ENCODE measurements at regions of chr2 and their contacts with region 1.

Region 1: DNA sequence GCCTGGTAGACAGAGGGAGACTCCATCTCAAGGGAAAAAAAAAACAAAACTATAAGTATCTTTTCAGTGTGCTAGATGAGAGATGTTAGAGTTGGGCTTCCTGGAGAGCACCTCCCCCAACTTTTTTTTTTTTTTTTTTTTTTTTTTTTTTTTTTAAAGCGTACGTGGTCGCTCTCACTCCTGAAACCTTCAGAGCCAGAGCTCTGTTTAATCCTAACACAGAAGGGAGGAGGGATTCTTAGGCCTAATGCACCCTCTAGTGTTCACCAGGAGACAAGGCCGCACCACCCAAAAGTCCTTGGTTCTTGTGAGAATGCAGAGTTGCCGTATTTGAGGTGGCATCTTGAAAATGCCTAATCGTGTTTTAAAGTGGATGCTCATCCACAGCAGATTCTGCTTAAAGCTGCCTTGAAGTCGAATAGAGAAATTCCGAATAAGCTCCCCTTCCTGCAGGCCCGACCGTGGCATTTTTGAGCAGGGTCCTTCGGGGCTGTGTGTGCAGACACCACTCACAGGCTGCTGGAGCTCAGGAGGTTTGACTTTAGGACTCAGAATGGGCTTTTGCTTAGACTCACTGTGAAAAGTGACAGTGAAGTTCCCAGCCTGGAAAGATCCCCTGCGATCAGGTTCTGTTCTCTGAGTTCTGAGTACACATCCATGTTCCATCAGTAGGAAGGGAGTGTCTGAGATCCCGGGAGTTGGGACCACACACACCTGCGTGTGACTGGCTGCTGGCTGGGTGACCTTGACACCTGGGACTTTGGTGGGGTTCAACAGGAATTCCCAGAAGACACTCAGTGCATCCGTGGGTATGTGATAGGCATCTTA is 252.6 kb downstream of the AGAP1 start:
- DNase-seq: peak; percentile 34 to 49 (median 48)
- H3K4me3 ChIP-seq: no peak overlapping the region
- H3K4me3 Mint-ChIP-seq: no peak overlapping the region
- H3K27ac ChIP-seq: no peak overlapping the region
- H3K27ac Mint-ChIP-seq: no peak overlapping the region
- H3K4me1 ChIP-seq: no peaks in the 10 kb centered on the region
- H3K4me1 Mint-ChIP-seq: no peaks in the 10 kb centered on the region
- H3K27me3 ChIP-seq: no peaks in the 10 kb centered on the region
- H3K27me3 Mint-ChIP-seq: peaks cover 8 to 15% of the 10 kb centered on the region in 2 donors

Region 2: DNA sequence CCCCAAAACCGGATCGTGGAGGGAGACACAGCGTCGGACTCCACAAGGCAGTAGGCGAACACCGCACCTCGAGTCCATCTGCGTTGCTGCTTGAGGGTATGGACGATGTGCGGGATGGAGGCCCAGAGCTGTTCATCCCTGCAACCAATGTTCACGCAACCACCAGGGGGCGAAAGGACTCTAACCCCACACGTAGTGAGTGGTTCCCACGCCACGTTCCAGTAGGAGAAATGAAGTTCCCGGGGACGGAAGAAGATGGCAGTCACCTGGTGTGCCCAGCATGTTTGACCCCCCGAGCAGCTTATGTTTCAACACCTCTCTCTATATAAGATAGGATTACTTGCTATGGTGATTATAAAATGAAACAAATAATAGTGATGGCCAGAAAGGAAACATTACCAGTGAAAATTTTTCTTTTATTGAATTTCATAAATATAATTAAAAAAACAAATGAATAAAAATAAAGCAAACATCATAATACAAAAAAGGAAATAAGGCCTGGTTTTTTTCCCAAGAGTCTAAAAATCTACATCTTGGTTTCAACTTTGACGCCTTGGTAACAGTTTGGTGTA is 610.4 kb before region 1 on chr2:
- CTCF ChIA-PET with region 1: interaction called, 13 read pairs
- POLR2A ChIA-PET with region 1: no interaction called
- intact Hi-C with region 1: no loop called
- DNase-seq: peak in 4 of 5 donors; percentile 7 to 28 (median 10)
- H3K4me3 ChIP-seq: no peak overlapping the region
- H3K4me3 Mint-ChIP-seq: no peak overlapping the region
- H3K27ac ChIP-seq: no peak overlapping the region
- H3K27ac Mint-ChIP-seq: no peak overlapping the region
- H3K4me1 ChIP-seq: peaks cover 3% of the 10 kb centered on the region
- H3K4me1 Mint-ChIP-seq: no peaks in the 10 kb centered on the region
- H3K27me3 ChIP-seq: peaks cover 11% of the 10 kb centered on the region
- H3K27me3 Mint-ChIP-seq: peaks cover 10 to 11% of the 10 kb centered on the region in 2 donors

Region 3: DNA sequence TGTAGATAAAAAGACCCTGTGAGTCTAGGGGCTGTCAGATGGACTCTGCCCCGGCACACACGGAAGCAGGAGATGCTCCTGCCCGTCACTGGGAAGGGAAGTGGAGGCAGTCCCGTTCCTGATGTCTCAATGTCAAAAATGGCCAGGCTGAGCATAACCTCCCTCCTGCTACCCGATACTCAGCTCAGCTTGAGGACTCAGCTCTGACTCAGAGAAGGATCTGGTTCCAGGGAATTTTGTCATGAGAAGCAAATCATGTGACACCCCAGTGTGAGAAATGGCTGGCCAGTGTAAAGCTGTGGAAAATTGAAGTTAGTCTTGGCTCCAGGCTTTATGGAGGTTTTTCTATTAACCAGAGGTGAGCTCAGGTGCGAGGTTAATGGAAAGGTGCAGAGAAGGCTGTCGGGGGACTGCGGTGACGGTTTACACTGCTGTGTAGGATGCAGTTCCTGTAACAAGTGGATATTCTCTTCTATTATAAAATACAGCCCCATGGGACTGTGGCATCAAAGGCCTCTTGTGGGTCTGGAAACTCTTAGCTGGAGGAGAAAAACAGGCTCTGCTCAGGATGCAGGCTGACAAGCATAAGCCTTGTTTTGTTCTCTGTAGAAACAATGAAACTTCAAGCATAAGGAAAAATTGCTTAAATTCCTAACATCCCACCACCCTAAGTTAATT is 277.4 kb before region 1 on chr2:
- CTCF ChIA-PET with region 1: no interaction called
- POLR2A ChIA-PET with region 1: no interaction called
- intact Hi-C with region 1: no loop called
- DNase-seq: no peak
- H3K4me3 ChIP-seq: no peak overlapping the region
- H3K4me3 Mint-ChIP-seq: no peak overlapping the region
- H3K27ac ChIP-seq: no peak overlapping the region
- H3K27ac Mint-ChIP-seq: no peak overlapping the region
- H3K4me1 ChIP-seq: no peaks in the 10 kb centered on the region
- H3K4me1 Mint-ChIP-seq: no peaks in the 10 kb centered on the region
- H3K27me3 ChIP-seq: no peaks in the 10 kb centered on the region
- H3K27me3 Mint-ChIP-seq: peaks cover 5 to 8% of the 10 kb centered on the region in 2 donors

Region 4: DNA sequence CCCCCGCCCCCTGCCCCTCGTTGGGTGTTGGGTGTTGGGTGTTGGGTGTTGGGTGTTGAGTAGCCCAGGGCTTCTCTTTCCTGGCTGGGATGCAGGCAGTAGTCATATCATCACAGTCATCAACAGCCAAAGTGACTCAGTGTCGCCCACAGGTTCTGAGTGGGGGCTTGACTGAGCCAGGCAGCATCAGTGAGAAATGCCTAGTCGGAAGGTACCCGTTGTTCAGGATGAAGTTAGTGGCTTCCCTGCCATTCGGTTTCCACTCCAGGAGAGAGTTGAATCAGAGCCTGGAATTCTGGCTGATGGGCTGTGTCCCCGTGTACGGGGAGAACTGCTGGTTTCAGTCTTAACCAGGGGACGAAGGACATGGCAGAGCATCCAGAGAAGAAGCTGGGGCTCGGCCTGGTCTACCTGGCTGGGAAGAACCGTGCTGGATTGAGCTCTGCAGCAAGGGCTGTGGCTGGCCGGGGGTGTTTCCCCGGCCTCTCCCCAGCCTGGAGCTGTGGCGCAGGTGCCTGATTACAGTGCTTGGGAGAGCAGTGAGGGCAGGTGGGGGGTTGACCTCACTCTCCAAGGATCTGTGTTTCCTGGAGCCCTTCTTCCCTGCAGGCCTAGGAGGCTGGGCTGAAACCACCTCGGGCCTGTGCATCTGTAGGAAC is 203.2 kb before region 1 on chr2:
- CTCF ChIA-PET with region 1: no interaction called
- POLR2A ChIA-PET with region 1: no interaction called
- intact Hi-C with region 1: no loop called
- DNase-seq: no peak
- H3K4me3 ChIP-seq: no peak overlapping the region
- H3K4me3 Mint-ChIP-seq: no peak overlapping the region
- H3K27ac ChIP-seq: no peak overlapping the region
- H3K27ac Mint-ChIP-seq: no peak overlapping the region
- H3K4me1 ChIP-seq: no peaks in the 10 kb centered on the region
- H3K4me1 Mint-ChIP-seq: no peaks in the 10 kb centered on the region
- H3K27me3 ChIP-seq: no peaks in the 10 kb centered on the region
- H3K27me3 Mint-ChIP-seq: peaks cover 4% of the 10 kb centered on the region in 2 donors

Region 5: DNA sequence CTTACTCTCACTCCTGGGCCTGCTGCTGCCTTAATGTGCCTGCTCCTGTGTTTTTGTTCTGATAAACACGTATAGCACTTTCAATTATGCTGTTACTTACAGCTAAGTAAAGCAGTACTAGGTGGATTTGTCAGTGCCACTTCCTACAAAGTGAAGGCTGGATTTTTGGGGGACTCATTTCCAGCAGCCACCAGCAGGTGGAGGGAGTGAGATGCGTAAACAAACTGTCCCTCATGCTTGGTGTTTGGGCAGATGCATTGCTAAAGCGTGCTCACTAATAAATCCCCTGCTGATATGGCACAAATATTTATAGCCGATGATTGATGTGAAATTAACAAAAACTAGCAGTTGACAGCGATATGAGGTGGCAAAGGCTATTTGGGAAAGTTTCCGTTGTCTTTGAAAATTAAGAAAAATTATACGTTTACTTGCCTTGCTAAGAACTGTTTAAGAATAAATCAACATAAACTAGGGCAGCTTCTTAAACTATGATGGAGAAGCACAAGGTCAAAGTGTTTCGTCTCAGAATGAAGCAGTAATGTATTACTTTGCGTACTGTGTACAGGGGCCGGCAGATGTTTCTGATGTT is 151.0 kb before region 1 on chr2:
- CTCF ChIA-PET with region 1: interaction called, 59 read pairs
- POLR2A ChIA-PET with region 1: no interaction called
- intact Hi-C with region 1: no loop called
- DNase-seq: peak in 4 of 5 donors; percentile 14 to 28 (median 22)
- H3K4me3 ChIP-seq: no peak overlapping the region
- H3K4me3 Mint-ChIP-seq: no peak overlapping the region
- H3K27ac ChIP-seq: no peak overlapping the region
- H3K27ac Mint-ChIP-seq: no peak overlapping the region
- H3K4me1 ChIP-seq: no peaks in the 10 kb centered on the region
- H3K4me1 Mint-ChIP-seq: peaks cover 0 to 1% (median 0%) of the 10 kb centered on the region in 4 donors
- H3K27me3 ChIP-seq: no peaks in the 10 kb centered on the region
- H3K27me3 Mint-ChIP-seq: peaks cover 2 to 3% of the 10 kb centered on the region in 2 donors

Region 6: GRCh38 chr2:235734688-235735231 is 11.7 kb before region 1 on chr2:
- CTCF ChIA-PET with region 1: interaction called, 14 read pairs
- POLR2A ChIA-PET with region 1: no interaction called
- intact Hi-C with region 1: no loop called
- DNase-seq: no peak
- H3K4me3 ChIP-seq: no peak overlapping the region
- H3K4me3 Mint-ChIP-seq: no peak overlapping the region
- H3K27ac ChIP-seq: no peak overlapping the region
- H3K27ac Mint-ChIP-seq: no peak overlapping the region
- H3K4me1 ChIP-seq: no peaks in the 10 kb centered on the region
- H3K4me1 Mint-ChIP-seq: peaks cover 0 to 3% (median 1%) of the 10 kb centered on the region in 4 donors
- H3K27me3 ChIP-seq: no peaks in the 10 kb centered on the region
- H3K27me3 Mint-ChIP-seq: peaks cover 2 to 3% of the 10 kb centered on the region in 2 donors

Measured in CD4-positive, alpha-beta memory T cell (primary cell).